T-cell (primary cell): ENCODE measurements at regions of chr1 and their contacts with region 1.

Region 1: GRCh38 chr1:161225534-161226319 is at the start of gene TOMM40L:
- DNase-seq: peak; percentile 75 to 97 (median 87)
- ATAC-seq: peak; percentile 94 to 97 (median 94)
- H3K4me3 ChIP-seq: peak within 1 kb of the TSS; percentile 71 to 86
- H3K4me3 Mint-ChIP-seq: peak within 1 kb of the TSS; percentile 89 to 100 (median 99)
- H3K27ac ChIP-seq: peak within 1 kb of the TSS; percentile 75
- H3K27ac Mint-ChIP-seq: peak within 1 kb of the TSS; percentile 96 to 98
- H3K4me1 ChIP-seq: peaks cover 15 to 31% of the 10 kb centered on the region in 2 experiments
- H3K4me1 Mint-ChIP-seq: peaks cover 36 to 48% (median 38%) of the 10 kb centered on the region in 3 donors
- H3K27me3 ChIP-seq: no peaks in the 10 kb centered on the region
- H3K27me3 Mint-ChIP-seq: no peaks in the 10 kb centered on the region
- total RNA-seq, gene TOMM40L: 6.3 to 12.2 (median 11.0) TPM

Region 2: DNA sequence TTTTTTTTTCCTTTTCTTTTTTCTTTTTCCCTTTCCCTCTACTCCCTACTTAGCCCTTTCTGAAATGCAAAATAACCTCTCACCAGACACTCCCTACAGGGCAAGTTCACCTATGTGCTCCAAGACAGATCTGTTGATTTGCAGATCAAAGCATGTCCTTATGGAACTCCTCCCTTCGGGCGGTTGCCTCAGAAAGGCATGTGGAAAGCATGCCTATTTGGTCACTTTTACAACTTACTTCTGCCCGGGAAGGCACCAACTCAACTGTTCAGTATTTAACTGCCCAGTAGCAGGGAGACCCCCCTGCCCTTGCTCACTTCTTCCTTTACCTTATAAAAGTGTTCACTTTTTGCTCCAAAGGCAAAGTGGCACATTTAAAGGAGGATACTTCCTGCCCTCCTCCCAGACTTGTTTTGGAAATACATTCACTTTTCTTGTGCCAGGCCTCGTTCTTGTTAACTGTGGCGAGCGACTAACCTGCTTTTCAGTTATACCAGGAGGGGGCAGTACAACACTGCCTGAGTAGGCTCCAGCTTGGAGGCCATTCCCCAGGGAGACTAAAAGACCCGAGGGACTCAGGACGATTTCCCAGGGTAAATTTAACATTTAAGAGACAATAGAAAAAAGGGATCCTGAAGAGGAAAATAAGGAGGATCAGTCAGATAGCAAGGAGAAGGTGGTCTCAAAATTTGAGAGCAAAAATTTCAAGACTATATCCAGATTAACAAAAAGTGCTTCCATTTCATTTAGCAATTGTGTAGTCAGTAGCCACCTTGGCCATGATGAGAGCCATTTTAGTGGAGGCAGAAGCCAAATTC is 499.0 kb before region 1 on chr1:
- CTCF ChIA-PET with region 1: no interaction called
- POLR2A ChIA-PET with region 1: interaction called in 1 of 2 experiments, 10 read pairs
- DNase-seq: peak in 34 of 35 experiments; percentile 19 to 89 (median 52)
- ATAC-seq: peak; percentile 74 to 87 (median 77)
- H3K4me3 ChIP-seq: no peak overlapping the region
- H3K4me3 Mint-ChIP-seq: no peak overlapping the region
- H3K27ac ChIP-seq: no peak overlapping the region
- H3K27ac Mint-ChIP-seq: no peak overlapping the region
- H3K4me1 ChIP-seq: peaks cover 6 to 17% of the 10 kb centered on the region in 2 experiments
- H3K4me1 Mint-ChIP-seq: peaks cover 17 to 18% (median 17%) of the 10 kb centered on the region in 3 donors
- H3K27me3 ChIP-seq: no peaks in the 10 kb centered on the region
- H3K27me3 Mint-ChIP-seq: no peaks in the 10 kb centered on the region

Region 3: GRCh38 chr1:161092621-161093028 is 133.1 kb before region 1 on chr1:
- CTCF ChIA-PET with region 1: no interaction called
- POLR2A ChIA-PET with region 1: no interaction called
- DNase-seq: no peak
- ATAC-seq: peak in 3 of 4 experiments; percentile 48 to 67 (median 61)
- H3K4me3 ChIP-seq: no peak overlapping the region
- H3K4me3 Mint-ChIP-seq: no peak overlapping the region
- H3K27ac ChIP-seq: no peak overlapping the region
- H3K27ac Mint-ChIP-seq: no peak overlapping the region
- H3K4me1 ChIP-seq: peaks cover 6 to 13% of the 10 kb centered on the region in 2 experiments
- H3K4me1 Mint-ChIP-seq: peaks cover 16 to 30% (median 27%) of the 10 kb centered on the region in 3 donors
- H3K27me3 ChIP-seq: no peaks in the 10 kb centered on the region
- H3K27me3 Mint-ChIP-seq: peaks cover 0 to 2% of the 10 kb centered on the region in 2 donors

Region 4: GRCh38 chr1:161185282-161185682 is 40.4 kb before region 1 on chr1:
- CTCF ChIA-PET with region 1: interaction called, 8 to 19 read pairs
- POLR2A ChIA-PET with region 1: no interaction called
- DNase-seq: peak; percentile 60 to 91 (median 80)
- ATAC-seq: peak; percentile 74 to 89 (median 75)
- H3K4me3 ChIP-seq: peak overlapping the region; percentile 5 to 45
- H3K4me3 Mint-ChIP-seq: peak overlapping the region; percentile 76 to 78 (median 76)
- H3K27ac ChIP-seq: peak overlapping the region; percentile 89
- H3K27ac Mint-ChIP-seq: peak overlapping the region; percentile 95
- H3K4me1 ChIP-seq: peaks cover 63 to 87% of the 10 kb centered on the region in 2 experiments
- H3K4me1 Mint-ChIP-seq: peaks cover 81 to 86% (median 84%) of the 10 kb centered on the region in 3 donors
- H3K27me3 ChIP-seq: no peaks in the 10 kb centered on the region
- H3K27me3 Mint-ChIP-seq: no peaks in the 10 kb centered on the region

Region 5: DNA sequence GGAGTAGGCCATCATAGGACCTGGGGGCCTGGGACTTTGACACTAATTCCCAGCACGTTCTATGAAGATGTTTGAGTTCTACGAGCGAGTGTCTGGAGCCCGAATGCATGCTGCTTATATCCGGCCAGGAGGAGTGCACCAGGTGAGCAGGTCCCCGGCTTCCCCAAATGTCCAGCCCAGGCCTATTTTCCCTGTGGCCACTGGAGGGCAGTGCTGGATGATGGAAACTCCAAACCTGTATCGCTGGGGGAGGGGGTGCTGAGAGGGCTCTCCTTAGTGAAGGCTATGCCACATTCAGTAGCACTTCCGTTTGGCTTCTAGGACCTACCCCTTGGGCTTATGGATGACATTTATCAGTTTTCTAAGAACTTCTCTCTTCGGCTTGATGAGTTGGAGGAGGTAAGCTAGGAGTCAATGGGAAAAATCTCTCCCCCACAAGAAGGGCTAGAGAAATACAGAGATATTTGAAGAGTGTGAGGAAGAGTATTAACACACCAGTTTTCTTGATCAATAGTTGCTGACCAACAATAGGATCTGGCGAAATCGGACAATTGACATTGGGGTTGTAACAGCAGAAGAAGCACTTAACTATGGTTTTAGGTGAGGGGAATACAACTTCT is 15.8 kb before region 1 on chr1:
- CTCF ChIA-PET with region 1: interaction called, 7 to 76 read pairs
- POLR2A ChIA-PET with region 1: interaction called in 1 of 2 experiments, 5 read pairs
- DNase-seq: peak in 34 of 35 experiments; percentile 49 to 82 (median 69)
- ATAC-seq: peak; percentile 90 to 98 (median 90)
- H3K4me3 ChIP-seq: no peak overlapping the region
- H3K4me3 Mint-ChIP-seq: no peak overlapping the region
- H3K27ac ChIP-seq: no peak overlapping the region
- H3K27ac Mint-ChIP-seq: peak overlapping the region; percentile 71 to 84
- H3K4me1 ChIP-seq: peaks cover 3 to 19% of the 10 kb centered on the region in 2 experiments
- H3K4me1 Mint-ChIP-seq: peaks cover 34 to 40% (median 38%) of the 10 kb centered on the region in 3 donors
- H3K27me3 ChIP-seq: no peaks in the 10 kb centered on the region
- H3K27me3 Mint-ChIP-seq: no peaks in the 10 kb centered on the region

Region 6: GRCh38 chr1:161314201-161314981 is 88.7 kb after region 1 on chr1 and contains the start of gene SDHC:
- CTCF ChIA-PET with region 1: interaction called in 1 of 2 experiments, 29 read pairs
- POLR2A ChIA-PET with region 1: interaction called in 1 of 2 experiments, 13 read pairs
- DNase-seq: peak; percentile 78 to 95 (median 90)
- ATAC-seq: peak; percentile 99
- H3K4me3 ChIP-seq: peak within 1 kb of the TSS; percentile 93 to 100
- H3K4me3 Mint-ChIP-seq: peak within 1 kb of the TSS; percentile 94 to 97 (median 96)
- H3K27ac ChIP-seq: peak within 1 kb of the TSS; percentile 96
- H3K27ac Mint-ChIP-seq: peak within 1 kb of the TSS; percentile 99
- H3K4me1 ChIP-seq: peaks cover 11 to 13% of the 10 kb centered on the region in 2 experiments
- H3K4me1 Mint-ChIP-seq: peaks cover 26 to 30% (median 29%) of the 10 kb centered on the region in 3 donors
- H3K27me3 ChIP-seq: no peaks in the 10 kb centered on the region
- H3K27me3 Mint-ChIP-seq: no peaks in the 10 kb centered on the region
- total RNA-seq, gene SDHC: 86.4 to 106 (median 103) TPM

Region 7: GRCh38 chr1:161389691-161390558 is 164.2 kb after region 1 on chr1:
- CTCF ChIA-PET with region 1: interaction called, 4 to 26 read pairs
- POLR2A ChIA-PET with region 1: no interaction called
- DNase-seq: peak; percentile 84 to 98 (median 93)
- ATAC-seq: peak; percentile 90 to 97 (median 94)
- H3K4me3 ChIP-seq: peak overlapping the region; percentile 84 to 88
- H3K4me3 Mint-ChIP-seq: peak overlapping the region; percentile 86 to 91 (median 89)
- H3K27ac ChIP-seq: peak overlapping the region; percentile 87
- H3K27ac Mint-ChIP-seq: peak overlapping the region; percentile 86 to 93
- H3K4me1 ChIP-seq: peaks cover 12 to 24% of the 10 kb centered on the region in 2 experiments
- H3K4me1 Mint-ChIP-seq: peaks cover 36 to 37% (median 37%) of the 10 kb centered on the region in 3 donors
- H3K27me3 ChIP-seq: no peaks in the 10 kb centered on the region
- H3K27me3 Mint-ChIP-seq: no peaks in the 10 kb centered on the region